ENCODE measurements at regions of chr18 and their contacts with region 1.

Region 1: DNA sequence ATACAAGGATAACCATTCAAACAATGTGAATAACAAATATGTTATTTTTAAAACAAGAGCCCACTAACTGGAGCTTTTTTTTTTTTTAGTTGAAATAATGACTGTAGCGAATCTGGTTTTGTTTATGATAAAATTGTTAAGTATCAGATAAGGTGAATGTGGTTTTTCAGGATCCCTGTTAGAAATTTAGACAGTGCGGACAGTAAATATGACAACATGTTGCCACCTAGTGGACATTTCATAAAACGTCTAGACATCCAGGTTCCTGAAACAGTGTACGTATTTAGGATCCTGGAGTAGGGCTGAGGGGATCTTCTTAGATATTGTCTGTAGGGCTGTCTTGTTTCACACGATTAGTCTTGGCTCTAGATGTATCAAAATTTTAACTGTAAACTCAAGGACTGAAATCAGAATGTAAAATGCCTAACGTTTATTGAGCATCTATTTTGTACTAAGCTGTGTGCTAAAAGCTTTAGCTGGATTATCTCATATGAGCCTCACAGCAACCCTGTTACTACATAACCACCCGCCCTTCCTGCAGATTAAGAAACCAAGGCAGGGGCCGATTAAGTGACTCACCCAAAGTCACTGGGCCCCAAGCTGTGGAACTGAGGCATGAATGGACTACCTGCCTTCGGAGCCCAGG is 23.9 kb upstream of the CCDC68 start:
- DNase-seq: no peak
- H3K4me3 ChIP-seq: no peak overlapping the region
- H3K27ac ChIP-seq: no peak overlapping the region
- H3K27me3 ChIP-seq: peaks cover 0 to 3% (median 0%) of the 10 kb centered on the region in 45 donors
- CTCF ChIP-seq: peak; percentile 59 to 94 (median 80)

Region 2: GRCh38 chr18:54679318-54680149 is 303.6 kb before region 1 on chr18:
- intact Hi-C with region 1: loop called (anchors 2 to 5 kb)
- DNase-seq: no peak
- H3K4me3 ChIP-seq: no peak overlapping the region
- H3K27ac ChIP-seq: no peak overlapping the region
- H3K27me3 ChIP-seq: no peaks in the 10 kb centered on the region
- CTCF ChIP-seq: peak; percentile 12 to 84 (median 64)

Measured in dorsolateral prefrontal cortex (tissue), 120 donors.